Activated T-helper 1 cell treated with anti-CD3 and anti-CD28 coated beads, Interleukin-12 subunit alpha, Interleukin-12 subunit beta, Interleukin-2, Interleukin-4 antibody, amounts not matched to agents 30 ng/mL and 10 ng/mL and 1 ng/mL, durations not matched to agents 14 hours and 24 hours and 36 hours (primary cell): ENCODE measurements at regions of chr3 and their contacts with region 1.

Region 1: GRCh38 chr3:69532544-69533224 is 146.8 kb upstream of the FRMD4B start:
- DNase-seq: no peak
- H3K4me3 Mint-ChIP-seq: no peak overlapping the region
- H3K27ac Mint-ChIP-seq: no peak overlapping the region
- H3K4me1 Mint-ChIP-seq: no peaks in the 10 kb centered on the region
- H3K27me3 Mint-ChIP-seq: peaks cover 2% of the 10 kb centered on the region

Region 2: DNA sequence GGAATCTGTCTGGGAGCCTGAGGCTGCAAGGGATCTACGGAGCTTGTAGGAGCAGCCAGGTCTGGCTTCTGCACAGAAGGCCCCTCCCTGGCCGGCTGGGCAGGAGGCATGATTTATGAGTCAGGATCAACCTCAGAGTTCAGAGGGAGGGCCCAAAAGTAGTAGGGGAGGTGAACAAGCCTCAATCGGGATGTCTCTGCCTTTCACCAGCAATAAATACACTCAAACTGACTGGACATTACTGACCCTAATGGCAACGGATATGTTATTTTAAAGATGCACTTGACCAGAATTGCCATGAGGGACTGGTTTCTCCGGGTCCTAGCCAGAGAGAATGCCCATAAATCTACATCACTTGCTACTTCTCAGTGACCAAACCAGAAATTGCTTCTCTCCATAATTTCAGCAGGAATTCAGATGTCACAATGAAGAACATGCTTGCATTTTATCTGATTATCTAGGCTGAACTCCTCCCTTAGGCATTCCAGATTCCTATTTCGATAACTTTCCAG is 300.7 kb before region 1 on chr3:
- intact Hi-C with region 1: no loop called
- DNase-seq: no peak
- H3K4me3 Mint-ChIP-seq: no peak overlapping the region
- H3K27ac Mint-ChIP-seq: no peak overlapping the region
- H3K4me1 Mint-ChIP-seq: peaks cover 25% of the 10 kb centered on the region
- H3K27me3 Mint-ChIP-seq: no peaks in the 10 kb centered on the region

Region 3: GRCh38 chr3:69389520-69390248 is 143.0 kb before region 1 on chr3:
- intact Hi-C with region 1: no loop called
- DNase-seq: no peak
- H3K4me3 Mint-ChIP-seq: no peak overlapping the region
- H3K27ac Mint-ChIP-seq: no peak overlapping the region
- H3K4me1 Mint-ChIP-seq: peaks cover 6% of the 10 kb centered on the region
- H3K27me3 Mint-ChIP-seq: peaks cover 56% of the 10 kb centered on the region

Region 4: DNA sequence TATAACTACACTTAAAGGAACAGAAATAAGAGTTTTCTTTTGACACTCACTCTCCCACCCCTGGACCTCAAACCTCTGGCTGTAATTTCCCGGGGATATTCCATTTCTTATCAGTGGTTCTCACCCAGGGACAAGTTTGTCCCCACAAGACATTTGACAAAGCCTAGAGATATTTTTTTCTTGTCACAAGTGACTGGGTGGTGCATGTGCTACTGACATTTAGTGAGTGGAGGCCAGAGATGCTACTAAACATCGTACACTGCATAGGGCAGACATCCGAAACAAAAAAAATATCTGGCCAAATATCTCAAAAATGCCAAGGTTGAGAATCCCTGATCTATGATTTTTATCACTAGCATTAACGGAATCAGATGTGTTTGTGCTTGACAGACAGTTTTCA is 21.2 kb after region 1 on chr3:
- intact Hi-C with region 1: loop called (anchors 1 kb)
- DNase-seq: no peak
- H3K4me3 Mint-ChIP-seq: no peak overlapping the region
- H3K27ac Mint-ChIP-seq: no peak overlapping the region
- H3K4me1 Mint-ChIP-seq: no peaks in the 10 kb centered on the region
- H3K27me3 Mint-ChIP-seq: no peaks in the 10 kb centered on the region